ENCODE measurements at regions of chr1 and their contacts with region 1.

Region 1: DNA sequence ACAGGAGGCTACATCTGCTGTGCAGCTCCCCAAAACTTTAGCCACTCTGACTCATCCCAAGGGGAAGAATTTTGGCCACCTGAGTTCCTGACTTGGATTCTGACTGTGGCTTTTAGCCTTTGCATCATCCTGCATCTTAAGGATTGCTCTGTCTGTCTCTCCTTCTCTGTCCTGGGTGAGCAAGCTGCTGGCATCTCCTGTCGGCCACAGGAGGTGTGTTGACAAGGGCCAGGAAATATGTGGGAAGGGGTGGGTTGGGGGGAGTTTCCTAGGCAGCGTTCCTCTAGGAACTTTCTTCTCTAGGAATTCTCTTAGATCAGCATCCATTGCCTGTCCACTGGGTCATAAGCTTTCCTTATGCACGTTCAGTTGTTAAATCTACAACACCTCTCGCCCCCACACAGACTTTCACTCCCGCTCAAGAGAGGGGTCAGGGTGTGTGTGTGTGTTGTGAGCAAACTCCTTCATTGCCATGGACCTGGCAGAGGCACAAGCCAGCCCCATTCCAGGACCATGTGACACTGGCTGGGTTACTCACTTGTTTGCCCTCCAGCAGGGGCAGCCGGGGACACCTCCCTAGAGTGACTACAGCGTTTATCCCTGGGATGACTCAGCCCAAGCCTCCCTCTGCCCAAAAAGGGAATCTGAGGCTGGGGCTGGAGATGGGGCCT is 145.0 kb upstream of the DUSP10 start:
- DNase-seq: peak; percentile 100
- ATAC-seq: peak; percentile 96
- H3K4me3 ChIP-seq: peak overlapping the region; percentile 38
- H3K27ac ChIP-seq: peak overlapping the region; percentile 72
- H3K4me1 ChIP-seq: peaks cover 33% of the 10 kb centered on the region
- H3K27me3 ChIP-seq: no peaks in the 10 kb centered on the region
- CTCF ChIP-seq: peak; percentile 49

Region 2: DNA sequence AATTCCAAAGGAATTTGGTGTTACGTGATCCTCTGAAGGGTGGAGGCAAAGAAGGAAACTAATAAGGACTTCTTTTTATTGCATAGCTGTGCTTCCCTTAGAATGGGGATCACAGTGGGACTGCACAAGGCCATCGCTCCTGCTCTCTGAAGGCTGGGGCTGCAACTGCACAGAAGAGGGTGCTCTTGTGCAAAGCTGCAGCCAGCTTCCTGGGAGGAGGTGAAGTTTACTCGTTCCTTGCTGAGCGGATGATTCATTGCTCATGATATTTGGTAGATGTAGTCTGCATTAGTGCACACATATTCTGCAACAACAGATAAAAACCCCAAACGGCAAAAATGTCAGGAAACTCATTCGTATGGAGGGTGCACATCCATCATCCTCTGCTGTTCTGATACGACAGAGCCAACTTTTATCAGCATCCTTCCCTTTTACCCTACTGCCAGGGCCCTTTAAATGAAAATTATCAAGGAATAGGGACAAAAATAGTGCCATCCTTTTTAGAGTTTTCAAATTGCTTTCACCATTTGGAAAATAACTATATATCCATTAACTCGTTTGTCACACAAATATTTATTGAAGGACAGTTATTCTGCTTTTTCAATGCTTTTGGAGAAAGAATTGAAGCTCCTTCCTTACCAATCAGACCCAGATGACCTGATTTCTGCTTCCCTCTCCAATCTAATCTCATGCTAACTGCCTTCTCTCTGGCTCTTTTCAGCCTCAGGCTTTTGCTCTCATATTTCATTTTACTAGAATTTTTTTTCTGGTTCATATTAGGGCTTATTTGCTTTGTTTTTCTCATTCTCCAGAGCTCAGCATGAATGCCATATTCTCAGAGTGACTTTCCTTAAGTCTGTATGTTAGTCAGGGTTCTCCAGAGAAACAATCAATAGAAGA is 408.6 kb before region 1 on chr1:
- CTCF ChIA-PET with region 1: no interaction called
- POLR2A ChIA-PET with region 1: no interaction called
- intact Hi-C with region 1: loop called (anchors 1 kb)
- DNase-seq: peak; percentile 94
- ATAC-seq: peak; percentile 100
- H3K4me3 ChIP-seq: no peak overlapping the region
- H3K27ac ChIP-seq: peak overlapping the region; percentile 53
- H3K4me1 ChIP-seq: peaks cover 20% of the 10 kb centered on the region
- H3K27me3 ChIP-seq: no peaks in the 10 kb centered on the region
- CTCF ChIP-seq: peak; percentile 98

Region 3: GRCh38 chr1:221612264-221612777 is 274.6 kb before region 1 on chr1:
- CTCF ChIA-PET with region 1: no interaction called
- POLR2A ChIA-PET with region 1: no interaction called
- intact Hi-C with region 1: loop called (anchors 5 kb)
- DNase-seq: peak; percentile 99
- ATAC-seq: peak; percentile 89
- H3K4me3 ChIP-seq: no peak overlapping the region
- H3K27ac ChIP-seq: peak overlapping the region; percentile 73
- H3K4me1 ChIP-seq: peaks cover 45% of the 10 kb centered on the region
- H3K27me3 ChIP-seq: no peaks in the 10 kb centered on the region
- CTCF ChIP-seq: no peak

Region 4: DNA sequence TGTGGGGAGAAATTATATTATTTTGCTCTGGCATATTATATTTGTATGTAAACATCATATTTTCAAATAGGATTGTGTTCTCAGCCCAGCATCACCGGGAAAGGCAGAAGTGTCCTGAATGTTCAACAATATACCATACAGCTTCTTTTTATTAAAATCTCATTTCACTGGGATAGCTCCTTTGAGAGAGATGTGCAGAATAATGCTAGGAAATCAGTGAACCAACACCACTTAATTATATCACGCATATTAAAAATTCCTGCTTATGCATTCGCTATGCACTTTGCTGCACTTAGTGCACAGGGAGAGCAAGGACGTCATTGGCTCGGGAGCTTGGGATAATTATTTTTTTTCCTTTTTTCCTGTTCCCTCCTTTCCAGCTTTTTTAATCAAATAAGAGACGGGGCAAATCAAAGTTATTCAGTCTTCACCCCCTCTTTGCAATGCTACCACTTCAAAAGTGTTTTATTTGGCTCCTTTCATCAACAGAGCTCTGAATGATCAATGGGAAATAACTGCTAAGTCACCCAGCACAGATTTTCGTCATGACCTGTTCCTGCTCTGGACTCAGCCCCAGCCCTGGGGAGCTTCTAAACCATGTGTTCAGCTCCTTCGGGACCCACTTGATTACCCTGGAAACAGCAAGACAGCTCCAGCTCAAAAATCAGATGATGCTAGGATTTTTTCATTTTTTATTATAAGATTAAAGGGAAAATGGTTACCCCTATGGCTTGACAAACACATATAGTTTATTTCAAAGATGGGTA is 20.5 kb after region 1 on chr1:
- CTCF ChIA-PET with region 1: no interaction called
- POLR2A ChIA-PET with region 1: no interaction called
- intact Hi-C with region 1: no loop called
- DNase-seq: no peak
- ATAC-seq: no peak
- H3K4me3 ChIP-seq: no peak overlapping the region
- H3K27ac ChIP-seq: no peak overlapping the region
- H3K4me1 ChIP-seq: no peaks in the 10 kb centered on the region
- H3K27me3 ChIP-seq: no peaks in the 10 kb centered on the region
- CTCF ChIP-seq: no peak

Region 5: DNA sequence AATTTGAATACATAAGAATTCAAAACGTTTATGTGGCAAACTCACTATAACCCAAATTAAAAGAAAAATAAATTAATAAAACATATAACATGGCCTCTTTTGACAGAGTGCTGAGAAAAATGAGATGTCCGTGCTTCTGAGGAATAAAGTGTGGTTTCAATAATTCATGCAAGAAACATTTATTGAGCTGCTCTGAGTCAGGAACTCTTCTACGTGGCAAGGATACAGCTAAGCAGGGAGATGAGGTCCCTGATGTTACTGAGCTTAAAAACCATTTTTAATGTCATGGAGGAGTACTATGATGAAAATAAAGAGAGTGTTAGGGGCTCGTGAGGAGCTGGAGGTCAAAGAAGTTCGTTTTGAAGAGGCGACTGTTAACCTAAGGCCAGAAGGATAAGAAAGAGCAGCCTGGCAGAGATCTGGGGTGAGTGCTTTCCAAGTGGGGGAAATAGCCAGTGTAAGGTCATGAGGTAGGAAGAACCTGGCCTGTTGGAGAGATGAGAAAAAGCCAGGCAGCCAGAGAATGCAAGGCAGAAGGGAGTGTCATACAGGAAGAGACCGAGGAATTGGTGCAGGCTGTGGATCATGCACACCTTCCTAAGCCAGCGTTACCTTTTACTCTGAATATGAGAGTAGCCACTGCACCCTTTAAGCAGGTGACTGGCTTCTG is 37.2 kb after region 1 on chr1:
- CTCF ChIA-PET with region 1: no interaction called
- POLR2A ChIA-PET with region 1: no interaction called
- intact Hi-C with region 1: loop called (anchors 1 kb)
- DNase-seq: no peak
- ATAC-seq: no peak
- H3K4me3 ChIP-seq: no peak overlapping the region
- H3K27ac ChIP-seq: no peak overlapping the region
- H3K4me1 ChIP-seq: peaks cover 12% of the 10 kb centered on the region
- H3K27me3 ChIP-seq: no peaks in the 10 kb centered on the region
- CTCF ChIP-seq: no peak

Region 6: GRCh38 chr1:222009105-222009730 is 122.3 kb after region 1 on chr1:
- CTCF ChIA-PET with region 1: interaction called, 4 read pairs
- POLR2A ChIA-PET with region 1: no interaction called
- intact Hi-C with region 1: loop called (anchors 1 kb)
- DNase-seq: peak; percentile 78
- ATAC-seq: peak; percentile 88
- H3K4me3 ChIP-seq: no peak overlapping the region
- H3K27ac ChIP-seq: no peak overlapping the region
- H3K4me1 ChIP-seq: peaks cover 12% of the 10 kb centered on the region; the same call in 1 of the 2 replicates
- H3K27me3 ChIP-seq: no peaks in the 10 kb centered on the region
- CTCF ChIP-seq: peak; percentile 94

Region 7: DNA sequence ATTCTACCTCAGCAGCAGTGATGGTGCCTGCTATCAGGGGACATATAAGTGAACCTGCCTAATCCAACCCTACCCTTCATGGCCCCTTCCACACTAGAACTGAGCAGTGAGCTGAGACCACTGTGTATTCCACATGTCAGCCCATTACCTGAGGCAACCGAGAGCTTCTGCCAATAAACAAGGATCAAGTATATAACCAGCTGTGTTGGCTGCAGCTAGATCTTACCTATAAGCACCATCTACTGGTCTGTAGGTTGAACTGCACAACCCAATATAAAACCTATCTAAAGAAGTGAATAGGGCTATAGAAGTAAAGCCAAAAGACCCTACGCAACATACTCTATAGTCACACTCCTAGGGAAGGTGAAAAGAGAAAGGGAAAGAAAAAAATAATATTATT is 284.1 kb after region 1 on chr1:
- CTCF ChIA-PET with region 1: no interaction called
- POLR2A ChIA-PET with region 1: no interaction called
- intact Hi-C with region 1: loop called (anchors 10 kb)
- DNase-seq: peak; percentile 77
- ATAC-seq: peak; percentile 71
- H3K4me3 ChIP-seq: no peak overlapping the region
- H3K27ac ChIP-seq: no peak overlapping the region
- H3K4me1 ChIP-seq: no peaks in the 10 kb centered on the region
- H3K27me3 ChIP-seq: no peaks in the 10 kb centered on the region
- CTCF ChIP-seq: peak; percentile 90

Measured in PC-3 (cell line).